Activated T-helper 2 cell treated with anti-CD3 and anti-CD28 coated beads, Interferon-gamma antibody, Interleukin-2, Interleukin-4, amounts not matched to agents 10 μg/mL and 5 μg/mL and 100 μg/mL, durations not matched to agents 14 hours and 24 hours and 36 hours (primary cell): ENCODE measurements at regions of chr19 and their contacts with region 1.

Region 1: DNA sequence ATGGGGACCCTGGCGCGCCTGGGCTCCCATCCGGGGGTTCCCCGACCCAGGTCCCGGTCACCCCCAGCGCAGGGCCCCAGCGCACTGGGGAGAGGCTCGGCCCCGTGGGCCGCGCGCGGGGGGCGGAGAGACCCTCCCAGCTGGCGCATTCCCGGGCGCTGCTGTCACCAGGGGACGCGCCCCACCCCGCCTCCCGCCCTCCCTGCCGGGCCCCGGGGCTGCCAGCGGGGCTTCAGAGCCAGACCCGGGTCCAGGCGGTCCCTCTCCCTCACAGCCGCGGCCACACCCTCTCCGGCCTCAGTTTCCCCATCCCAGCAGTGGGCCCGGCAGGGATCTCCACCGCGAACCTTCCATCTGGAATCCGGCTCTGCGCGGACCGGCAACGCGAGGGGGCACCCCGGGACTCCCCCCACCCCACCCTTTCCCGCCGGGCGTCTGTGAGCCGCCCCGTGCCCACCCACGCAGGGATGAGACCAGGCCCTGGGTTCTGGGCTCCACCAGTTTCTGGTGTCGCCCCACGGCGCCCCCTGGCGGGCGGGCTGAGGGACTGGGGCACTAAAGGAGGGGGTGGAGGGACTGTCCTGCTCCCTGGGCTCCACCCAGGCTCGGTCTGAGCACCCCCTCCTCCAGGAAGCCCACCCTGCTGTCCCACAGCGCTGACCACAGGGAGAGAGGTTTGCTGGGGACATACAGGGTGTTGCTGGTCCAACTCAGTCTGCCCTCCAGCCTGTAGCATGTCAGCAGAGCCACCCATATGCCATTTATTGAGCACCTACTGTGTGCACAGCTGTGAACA is 878 bp upstream of the ADAMTSL5 start:
- DNase-seq: peak; percentile 54
- H3K4me3 Mint-ChIP-seq: peak overlapping the region; percentile 21
- H3K27ac Mint-ChIP-seq: no peak overlapping the region
- H3K4me1 Mint-ChIP-seq: peaks cover 8% of the 10 kb centered on the region
- H3K27me3 Mint-ChIP-seq: peaks cover 7% of the 10 kb centered on the region

Region 2: GRCh38 chr19:1275260-1275975 is 238.3 kb before region 1 on chr19 and contains the start of gene FAM174C:
- intact Hi-C with region 1: loop called (anchors 10 kb)
- DNase-seq: peak; percentile 93
- H3K4me3 Mint-ChIP-seq: peak within 1 kb of the TSS; percentile 92
- H3K27ac Mint-ChIP-seq: peak within 1 kb of the TSS; percentile 96
- H3K4me1 Mint-ChIP-seq: peaks cover 37% of the 10 kb centered on the region
- H3K27me3 Mint-ChIP-seq: no peaks in the 10 kb centered on the region
- total RNA-seq, gene FAM174C: 91.7 and 99.4 TPM in 2 replicates

Region 3: DNA sequence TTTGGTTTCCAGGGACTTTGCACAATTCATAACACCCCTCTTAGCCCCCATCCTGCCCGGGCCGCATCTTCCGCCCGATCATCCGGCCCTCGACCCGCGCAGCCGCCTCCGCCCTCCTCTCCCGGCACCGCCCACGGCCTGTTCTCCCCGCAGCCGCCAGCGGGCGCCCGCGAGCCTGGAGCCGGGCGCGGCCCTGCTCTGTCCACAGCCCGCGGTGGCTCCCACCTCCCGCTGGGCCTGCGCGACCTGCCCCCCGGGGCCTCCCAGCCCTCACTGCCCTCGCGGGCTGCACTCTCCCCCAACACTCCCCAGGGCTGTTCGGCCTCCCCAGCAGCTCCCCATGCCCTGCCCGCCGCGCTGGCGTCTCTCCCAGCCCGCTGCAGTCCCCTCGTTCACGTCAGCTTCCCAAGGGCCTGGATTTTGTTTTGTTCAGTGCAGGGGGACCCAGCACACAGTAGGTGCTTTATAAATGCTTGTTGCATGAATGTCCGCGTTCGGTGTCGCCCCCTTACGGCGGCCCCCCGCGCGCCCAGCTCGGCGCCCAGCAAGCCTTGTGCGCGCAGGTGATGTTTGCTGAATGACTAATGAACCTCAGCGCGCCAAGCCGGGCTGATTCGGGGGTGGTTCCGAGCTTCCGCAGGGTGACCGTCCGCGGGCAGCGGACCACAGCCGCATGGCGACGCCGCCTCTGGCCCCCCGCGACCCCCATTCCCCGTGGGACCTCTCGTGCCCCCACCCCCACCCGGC is 68.3 kb before region 1 on chr19:
- intact Hi-C with region 1: loop called (anchors 10 kb)
- DNase-seq: peak; percentile 78
- H3K4me3 Mint-ChIP-seq: peak overlapping the region; percentile 63
- H3K27ac Mint-ChIP-seq: no peak overlapping the region
- H3K4me1 Mint-ChIP-seq: peaks cover 4% of the 10 kb centered on the region
- H3K27me3 Mint-ChIP-seq: peaks cover 24% of the 10 kb centered on the region

Region 4: DNA sequence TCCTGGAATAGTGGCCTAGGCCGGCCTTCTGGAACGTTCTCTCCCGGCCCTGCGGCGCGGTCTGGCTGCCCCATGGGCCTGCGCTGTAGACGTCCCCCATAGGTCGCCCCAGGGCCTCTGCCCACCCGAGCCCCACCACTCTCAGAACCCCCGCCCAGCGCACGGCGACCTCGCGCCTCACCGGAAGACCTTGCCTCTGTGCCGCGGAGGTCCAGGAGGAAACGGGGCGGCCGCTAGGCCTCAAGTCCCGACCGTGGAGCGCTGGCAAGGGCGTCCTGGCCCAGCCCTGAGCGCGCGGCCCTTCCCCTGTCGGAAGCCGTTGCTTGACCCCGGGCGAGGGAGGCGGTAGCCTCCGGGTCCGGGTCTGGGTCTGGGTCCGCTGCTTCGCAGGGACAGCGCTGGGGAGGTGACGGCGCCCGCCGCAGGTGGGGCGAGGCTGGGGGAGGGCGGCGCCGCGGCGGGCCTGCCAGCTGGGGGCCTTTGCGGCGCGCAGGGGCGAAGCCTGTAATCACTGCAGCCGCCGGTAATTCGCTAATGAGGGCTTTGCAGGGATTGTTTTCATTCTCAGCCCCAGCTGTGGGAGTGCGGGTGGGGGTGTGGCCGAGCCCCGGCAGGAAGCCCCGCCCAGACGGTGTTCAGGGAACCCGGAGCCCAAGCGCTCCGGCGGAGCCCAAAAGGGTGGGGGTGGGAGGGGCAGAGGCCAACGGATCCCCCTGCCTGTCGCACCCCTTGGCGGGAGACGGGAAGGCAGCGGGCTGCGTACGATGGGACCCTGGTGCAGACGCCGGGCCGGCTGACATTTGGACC is 43.3 kb before region 1 on chr19:
- intact Hi-C with region 1: loop called (anchors 5 kb)
- DNase-seq: peak; percentile 71
- H3K4me3 Mint-ChIP-seq: peak overlapping the region; percentile 67
- H3K27ac Mint-ChIP-seq: peak overlapping the region; percentile 33
- H3K4me1 Mint-ChIP-seq: peaks cover 3% of the 10 kb centered on the region
- H3K27me3 Mint-ChIP-seq: peaks cover 12% of the 10 kb centered on the region

Region 5: DNA sequence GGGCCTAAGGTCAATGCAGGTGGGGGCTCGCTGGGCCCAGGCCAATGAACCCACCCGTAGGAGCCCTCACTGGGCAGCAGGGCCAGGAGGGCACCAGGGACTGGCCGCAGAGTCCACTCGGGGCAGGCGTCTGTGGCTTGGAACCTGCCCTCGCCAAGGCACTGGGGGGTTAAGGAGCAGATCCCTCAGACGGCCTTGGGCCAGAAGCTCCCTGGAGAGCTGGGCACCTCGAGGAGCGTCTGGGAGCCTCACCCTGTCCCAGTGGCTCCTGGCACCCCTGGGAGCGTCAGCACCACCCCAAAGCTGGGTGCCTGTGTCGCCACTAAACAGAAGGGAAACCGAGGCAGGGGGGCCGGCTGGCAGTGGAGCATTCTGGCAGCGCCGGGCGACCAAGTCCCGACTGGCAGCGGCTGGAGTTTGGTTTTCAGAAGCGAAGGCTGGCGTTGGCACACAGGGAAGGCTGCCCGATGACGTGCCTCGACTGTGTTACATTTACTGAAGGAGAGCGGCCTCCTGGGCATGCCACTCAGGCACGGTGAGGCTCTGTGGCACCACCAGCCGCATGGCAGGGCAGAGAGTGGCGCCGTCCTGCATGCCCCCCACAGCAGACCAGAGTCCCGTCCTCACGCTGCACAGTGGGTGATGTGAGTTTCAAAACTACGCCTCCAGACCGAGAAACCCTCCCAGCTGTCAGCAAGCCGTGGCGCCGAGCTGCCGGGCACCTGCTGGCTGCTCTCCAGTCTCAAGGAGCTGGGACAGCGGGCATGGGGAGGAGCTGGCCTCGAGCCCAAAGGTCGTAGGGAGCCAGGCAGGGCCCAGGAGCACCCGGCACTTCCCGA is 63.6 kb after region 1 on chr19:
- intact Hi-C with region 1: no loop called
- DNase-seq: no peak
- H3K4me3 Mint-ChIP-seq: no peak overlapping the region
- H3K27ac Mint-ChIP-seq: no peak overlapping the region
- H3K4me1 Mint-ChIP-seq: no peaks in the 10 kb centered on the region
- H3K27me3 Mint-ChIP-seq: no peaks in the 10 kb centered on the region